ENCODE measurements at regions of chr10 and their contacts with region 1.

Region 1: DNA sequence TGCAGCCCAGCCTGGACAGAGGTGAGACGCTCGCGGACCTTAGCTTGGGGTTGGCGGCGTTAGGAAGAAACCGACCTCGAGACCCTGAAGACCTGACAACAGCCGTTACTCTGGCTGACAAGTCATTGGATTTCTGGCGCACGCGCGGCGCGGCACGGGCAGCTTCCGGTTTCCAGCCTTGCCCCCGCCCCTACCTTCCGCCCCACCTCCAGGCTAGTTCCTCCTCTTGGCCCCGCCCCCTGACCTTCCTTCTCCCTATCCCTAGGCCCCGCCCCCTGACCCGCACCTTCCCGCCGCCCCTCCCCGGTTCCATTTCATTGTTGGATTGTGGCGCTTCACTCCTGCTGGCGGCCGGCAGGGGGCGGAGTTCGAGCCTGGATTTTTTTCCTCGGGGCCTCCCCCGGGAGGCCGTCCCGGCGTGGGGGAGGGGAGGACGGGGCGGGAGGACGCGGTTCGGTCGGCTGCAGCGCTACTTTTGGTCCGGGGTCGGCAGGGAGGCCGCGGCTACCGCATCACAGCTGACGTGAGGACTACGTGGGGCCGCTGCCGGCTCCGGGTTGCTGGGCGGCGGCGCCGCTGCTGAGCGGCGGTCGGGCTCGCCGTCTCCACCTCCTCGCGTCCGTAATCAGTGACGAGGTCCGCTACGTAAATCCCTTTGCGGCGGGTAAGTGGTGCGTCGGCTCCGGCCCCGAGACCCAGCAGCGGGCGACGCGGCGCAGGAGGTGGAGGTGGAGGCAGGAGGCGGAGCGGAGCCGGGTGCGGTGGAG is at the start of gene CREM:
- DNase-seq: peak; percentile 100
- H3K4me3 ChIP-seq: peak within 1 kb of the TSS; percentile 87
- H3K4me3 Mint-ChIP-seq: peak within 1 kb of the TSS; percentile 93
- H3K27ac Mint-ChIP-seq: peak within 1 kb of the TSS; percentile 97
- H3K4me1 ChIP-seq: peaks cover 9% of the 10 kb centered on the region
- H3K4me1 Mint-ChIP-seq: no peaks in the 10 kb centered on the region
- H3K27me3 ChIP-seq: no peaks in the 10 kb centered on the region
- H3K27me3 Mint-ChIP-seq: no peaks in the 10 kb centered on the region
- CTCF ChIP-seq: peak; percentile 96 to 99
- total RNA-seq, gene CREM: 24.7 and 26.1 TPM in 2 replicates

Region 2: DNA sequence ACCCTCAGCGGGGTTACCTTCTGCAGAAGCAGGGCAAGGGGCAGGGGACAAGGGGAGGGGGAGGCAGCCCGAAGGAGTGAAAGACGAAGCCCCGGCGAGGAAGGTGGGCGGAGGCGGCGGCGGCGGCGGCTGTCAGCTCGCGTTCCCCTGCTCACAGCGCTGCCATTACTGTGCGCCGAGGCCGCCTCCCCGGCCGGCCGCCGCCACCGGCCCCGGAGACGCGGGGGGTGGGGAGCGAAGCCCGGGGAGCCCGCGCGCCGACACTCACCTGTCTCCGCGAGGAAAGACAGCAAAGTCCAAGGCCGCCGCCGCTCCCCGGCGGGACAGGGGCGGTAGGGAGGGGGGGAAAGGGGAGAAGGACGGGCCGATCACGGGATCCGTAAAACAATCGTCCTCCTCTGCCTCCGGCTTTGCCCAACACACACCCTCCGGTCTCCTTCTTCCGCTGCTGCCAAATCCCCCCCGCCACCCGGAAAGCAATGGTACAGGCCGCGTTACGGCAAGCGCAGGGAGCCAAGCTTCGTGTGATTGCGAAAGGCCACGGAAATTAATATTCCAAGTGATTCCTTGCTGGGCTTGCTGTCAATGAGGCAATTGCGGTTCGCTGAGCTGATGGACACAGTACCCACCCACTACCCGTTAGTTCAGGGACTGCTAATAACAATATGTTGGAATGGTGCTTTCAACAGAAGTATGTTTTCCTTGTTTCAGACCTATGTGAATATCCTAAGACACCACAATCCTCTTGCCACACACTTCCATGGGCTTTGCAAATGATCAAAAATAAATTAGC is 36.4 kb before region 1 on chr10 and contains the start of gene CUL2:
- CTCF ChIA-PET with region 1: interaction called, 3 read pairs
- POLR2A ChIA-PET with region 1: interaction called, 10 read pairs
- intact Hi-C with region 1: loop called (anchors 1 kb)
- DNase-seq: peak; percentile 98
- H3K4me3 ChIP-seq: peak within 1 kb of the TSS; percentile 86
- H3K4me3 Mint-ChIP-seq: peak within 1 kb of the TSS; percentile 97
- H3K27ac Mint-ChIP-seq: peak within 1 kb of the TSS; percentile 97
- H3K4me1 ChIP-seq: no peaks in the 10 kb centered on the region
- H3K4me1 Mint-ChIP-seq: peaks cover 20% of the 10 kb centered on the region
- H3K27me3 ChIP-seq: no peaks in the 10 kb centered on the region
- H3K27me3 Mint-ChIP-seq: no peaks in the 10 kb centered on the region
- CTCF ChIP-seq: no peak
- total RNA-seq, gene CUL2: 66.8 and 68.0 TPM in 2 replicates

Region 3: GRCh38 chr10:35218339-35218955 is 91.7 kb after region 1 on chr10:
- CTCF ChIA-PET with region 1: interaction called, 13 read pairs
- POLR2A ChIA-PET with region 1: interaction called, 8 read pairs
- intact Hi-C with region 1: loop called (anchors 1 kb)
- DNase-seq: peak; percentile 81 to 82
- H3K4me3 ChIP-seq: no peak overlapping the region
- H3K4me3 Mint-ChIP-seq: no peak overlapping the region
- H3K27ac Mint-ChIP-seq: no peak overlapping the region
- H3K4me1 ChIP-seq: peaks cover 5% of the 10 kb centered on the region; the same call in 1 of the 2 replicates
- H3K4me1 Mint-ChIP-seq: peaks cover 7% of the 10 kb centered on the region
- H3K27me3 ChIP-seq: no peaks in the 10 kb centered on the region; the same call in 1 of the 2 replicates
- H3K27me3 Mint-ChIP-seq: peaks cover 3% of the 10 kb centered on the region
- CTCF ChIP-seq: peak; percentile 84 to 91

Region 4: DNA sequence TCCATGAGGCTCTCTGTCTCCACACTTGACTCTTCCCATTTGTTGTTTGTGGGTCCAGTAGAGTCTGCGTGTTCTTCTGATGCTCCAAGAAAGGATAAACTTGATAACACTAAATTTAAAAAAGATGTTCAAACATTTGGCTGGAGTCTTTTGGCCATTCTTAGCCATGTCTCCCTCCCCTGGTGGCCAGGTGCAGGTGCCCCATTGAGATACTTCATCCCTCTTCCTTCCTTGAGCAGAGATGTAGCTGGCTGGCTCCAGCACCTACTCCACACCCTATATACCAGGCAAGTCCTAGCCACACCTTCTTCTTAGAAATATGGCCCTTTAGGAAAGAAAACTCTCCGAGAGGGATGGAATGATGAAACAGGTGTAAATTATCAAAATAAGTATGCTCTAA is 375.2 kb after region 1 on chr10:
- CTCF ChIA-PET with region 1: no interaction called
- POLR2A ChIA-PET with region 1: interaction called, 5 read pairs
- intact Hi-C with region 1: loop called (anchors 10 kb)
- DNase-seq: peak in 1 of 2 experiments; percentile 21
- H3K4me3 ChIP-seq: no peak overlapping the region
- H3K4me3 Mint-ChIP-seq: no peak overlapping the region
- H3K27ac Mint-ChIP-seq: no peak overlapping the region
- H3K4me1 ChIP-seq: peaks cover 13% of the 10 kb centered on the region
- H3K4me1 Mint-ChIP-seq: peaks cover 37% of the 10 kb centered on the region
- H3K27me3 ChIP-seq: no peaks in the 10 kb centered on the region
- H3K27me3 Mint-ChIP-seq: no peaks in the 10 kb centered on the region
- CTCF ChIP-seq: peak; percentile 26 to 45